ENCODE measurements at regions of chr21 and their contacts with region 1.

Region 1: GRCh38 chr21:22728091-22728490 is 1729.9 kb downstream of the NCAM2 start:
- DNase-seq: no peak
- ATAC-seq: no peak

Region 2: DNA sequence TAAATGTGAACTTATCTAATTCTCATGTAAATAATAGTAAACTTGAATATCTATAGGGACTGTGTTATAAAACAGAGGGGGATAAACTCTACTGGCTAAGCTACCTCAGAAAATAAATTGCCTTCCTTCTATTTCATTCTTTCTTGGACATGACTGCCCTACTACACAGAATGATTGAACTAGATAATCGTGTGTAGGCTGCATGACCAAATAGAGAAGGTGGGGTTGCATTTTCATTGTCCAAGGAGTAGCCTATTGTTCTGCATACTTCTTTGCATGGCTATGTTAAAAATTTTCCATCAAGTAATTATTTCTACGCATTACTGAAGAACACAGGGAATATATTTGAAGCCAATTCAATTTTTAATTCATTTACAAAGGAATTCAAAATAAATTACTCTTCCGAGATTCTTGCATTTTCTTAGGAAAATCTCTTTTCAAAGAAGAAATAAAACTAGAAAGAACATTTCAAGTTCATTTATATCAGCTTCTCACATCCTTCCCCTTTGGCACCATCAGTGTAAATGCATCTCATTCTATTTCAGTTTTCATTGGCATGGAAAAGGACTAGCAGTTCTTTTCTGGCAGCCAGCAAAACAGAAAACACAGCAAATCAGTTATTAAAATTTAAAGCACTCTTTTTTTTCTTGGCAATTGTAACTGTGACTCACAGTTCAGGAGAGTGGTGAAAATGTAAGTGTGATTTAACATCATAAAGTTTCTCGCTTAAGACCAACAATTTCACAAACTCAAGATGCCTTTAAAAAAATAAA is 1015.2 kb before region 1 on chr21:
- intact Hi-C with region 1: loop called (anchors 10 kb)
- DNase-seq: no peak
- ATAC-seq: peak; percentile 32

Region 3: DNA sequence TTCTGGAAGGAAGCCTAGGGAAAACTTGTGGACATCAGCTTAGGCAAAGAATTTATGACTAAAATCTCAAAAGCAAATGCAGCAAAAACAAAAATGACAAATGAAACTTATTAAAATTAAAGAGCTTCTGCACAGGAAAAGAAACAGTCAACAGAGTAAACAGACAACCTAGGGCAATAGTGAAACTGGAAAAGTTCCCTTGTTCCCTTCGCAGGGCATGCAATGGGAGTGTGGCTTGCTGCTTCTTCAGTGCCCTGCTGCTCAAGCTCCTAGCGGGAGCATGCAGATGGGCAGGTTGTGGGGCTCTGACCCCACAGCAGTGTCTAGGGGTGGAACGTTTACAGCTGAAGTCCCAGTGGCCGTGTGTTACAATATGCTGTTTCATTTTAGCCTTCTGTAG is 67.6 kb after region 1 on chr21:
- intact Hi-C with region 1: no loop called
- DNase-seq: no peak
- ATAC-seq: no peak